ENCODE measurements at regions of chr21 and their contacts with region 1.

Region 1: DNA sequence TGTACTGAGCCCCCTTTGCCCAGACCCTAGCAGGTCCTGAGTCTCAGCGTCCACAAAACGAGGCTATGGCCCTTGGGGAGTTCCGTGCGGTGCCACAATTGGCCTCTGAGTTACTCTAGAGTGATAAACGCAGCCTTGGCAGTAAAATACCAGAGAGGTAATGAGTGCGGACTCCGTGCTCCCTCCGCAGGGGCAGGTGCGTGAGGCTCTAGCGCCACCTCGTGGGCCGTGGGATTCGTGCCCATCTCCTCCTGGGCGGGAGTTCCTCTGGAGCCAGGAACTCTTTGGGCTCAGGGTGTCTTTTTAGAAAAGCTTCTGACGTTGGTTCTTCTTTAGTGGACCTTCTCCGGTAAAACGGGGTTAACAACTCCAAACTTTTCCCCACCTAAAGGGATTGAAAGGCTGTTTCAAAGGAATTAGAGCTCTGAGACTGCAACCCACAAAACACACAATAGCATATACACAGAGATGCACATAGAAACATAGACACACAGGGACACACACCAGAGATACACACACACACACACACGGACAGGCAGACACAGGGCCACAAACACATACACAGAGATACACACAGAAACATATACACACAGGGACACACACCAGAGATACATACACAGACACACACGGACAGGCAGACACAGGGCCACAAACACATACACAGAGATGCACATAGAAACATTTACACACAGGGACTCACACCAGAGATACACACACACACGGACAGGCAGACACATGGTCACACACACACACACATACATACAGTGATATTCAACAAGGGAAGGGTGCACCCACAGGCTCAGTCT is 99.4 kb downstream of the KCNJ15 start:
- DNase-seq: no peak
- H3K4me3 ChIP-seq: no peak overlapping the region
- CTCF ChIP-seq: peak; percentile 98

Region 2: GRCh38 chr21:37700641-37701202 is 655.5 kb before region 1 on chr21:
- CTCF ChIA-PET with region 1: interaction called, 39 read pairs
- POLR2A ChIA-PET with region 1: no interaction called
- DNase-seq: peak; percentile 45
- H3K4me3 ChIP-seq: no peak overlapping the region
- CTCF ChIP-seq: peak; percentile 72

Region 3: GRCh38 chr21:38126669-38127303 is 229.4 kb before region 1 on chr21:
- CTCF ChIA-PET with region 1: interaction called, 30 read pairs
- POLR2A ChIA-PET with region 1: no interaction called
- DNase-seq: no peak
- H3K4me3 ChIP-seq: no peak overlapping the region
- CTCF ChIP-seq: peak; percentile 84

Region 4: DNA sequence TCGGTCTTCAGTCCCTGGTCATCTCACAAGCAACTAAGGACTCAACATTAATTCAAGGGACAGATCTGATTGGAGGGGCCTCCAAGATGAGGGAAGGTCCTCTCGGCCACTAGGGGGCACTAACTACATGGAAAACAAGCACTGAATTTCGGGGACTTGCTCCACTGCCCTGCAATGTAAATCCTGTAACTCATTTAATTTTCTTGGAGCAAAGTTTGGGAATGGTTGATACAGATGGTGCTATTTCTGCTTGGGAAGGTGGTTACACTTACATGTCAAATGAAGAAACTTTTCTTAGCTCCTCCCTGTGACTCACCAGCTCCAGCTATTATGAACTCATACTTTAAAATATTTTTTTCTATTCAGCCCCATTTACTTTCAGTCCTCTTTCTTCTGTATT is 196.8 kb before region 1 on chr21:
- CTCF ChIA-PET with region 1: interaction called, 459 read pairs
- POLR2A ChIA-PET with region 1: no interaction called
- DNase-seq: peak; percentile 49
- H3K4me3 ChIP-seq: no peak overlapping the region
- CTCF ChIP-seq: peak; percentile 82

Region 5: DNA sequence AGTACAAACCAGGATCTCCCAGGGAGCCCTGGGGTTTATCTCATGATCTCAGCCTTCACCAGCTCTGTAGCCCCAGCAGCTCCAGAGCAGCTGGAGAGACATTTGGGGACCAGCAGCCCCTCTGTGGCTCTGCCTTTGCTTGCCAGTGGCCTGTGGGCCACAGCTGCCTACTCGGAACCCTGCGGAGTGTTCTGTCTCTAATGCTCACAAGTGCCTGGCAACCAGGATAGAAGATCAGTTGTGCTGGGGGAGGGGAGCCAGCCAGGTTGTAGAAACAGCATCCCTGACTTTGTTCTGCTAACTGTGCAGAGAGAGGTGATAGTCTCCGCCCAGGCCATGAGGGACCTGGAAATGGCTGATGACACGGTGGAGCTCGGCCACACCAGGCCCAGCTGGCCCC is 150.3 kb before region 1 on chr21:
- CTCF ChIA-PET with region 1: interaction called, 10 read pairs
- POLR2A ChIA-PET with region 1: no interaction called
- DNase-seq: no peak
- H3K4me3 ChIP-seq: no peak overlapping the region
- CTCF ChIP-seq: no peak

Region 6: GRCh38 chr21:38244885-38245545 is 111.2 kb before region 1 on chr21:
- CTCF ChIA-PET with region 1: interaction called, 14 read pairs
- POLR2A ChIA-PET with region 1: interaction called, 4 read pairs
- DNase-seq: peak; percentile 86
- H3K4me3 ChIP-seq: no peak overlapping the region
- CTCF ChIP-seq: no peak

Region 7: DNA sequence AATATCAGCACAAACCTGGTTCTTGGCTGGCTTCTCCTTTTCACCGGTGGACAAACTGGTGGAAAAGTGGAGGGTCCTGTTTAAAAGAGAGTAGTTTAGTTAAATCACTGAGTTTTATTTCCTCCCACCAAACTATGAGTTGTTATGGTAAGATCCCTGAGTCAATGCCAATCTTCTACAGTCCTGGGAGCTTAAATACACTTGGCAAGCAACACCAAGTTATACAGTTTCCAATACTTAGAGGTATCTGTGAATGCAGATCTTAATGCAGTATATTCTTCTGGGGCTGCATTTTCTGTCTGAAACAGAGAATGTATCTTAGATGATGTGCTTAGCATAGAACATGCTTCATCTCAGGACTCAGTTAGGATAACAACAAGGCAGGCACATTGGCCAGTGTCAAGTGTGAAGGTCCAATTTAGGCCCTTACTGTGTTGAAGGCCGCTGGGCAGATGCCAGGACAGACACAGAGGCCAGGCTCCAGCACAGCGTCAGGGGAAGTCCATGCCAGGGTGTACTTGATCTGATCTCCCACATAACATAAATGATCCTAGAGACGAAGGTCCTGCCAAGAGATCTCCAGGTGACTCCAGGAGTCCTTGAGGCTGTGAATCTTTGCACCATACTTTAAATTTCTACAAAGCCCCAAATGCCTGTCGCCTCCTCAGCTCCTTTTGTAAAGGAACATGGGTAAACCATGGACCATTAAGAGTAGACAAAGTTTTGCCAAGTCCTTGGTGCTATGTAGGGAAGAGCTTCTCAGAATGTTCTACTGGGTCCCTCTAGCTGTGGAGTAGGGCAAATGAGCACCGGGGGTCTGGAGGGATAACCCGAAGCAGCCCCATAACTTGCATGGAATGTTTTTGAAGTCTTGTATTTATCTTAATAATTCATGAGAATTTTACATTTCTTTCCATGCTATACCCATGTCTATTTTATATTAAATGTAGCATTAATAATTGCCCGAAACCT is 22.6 kb before region 1 on chr21:
- CTCF ChIA-PET with region 1: interaction called, 10 read pairs
- POLR2A ChIA-PET with region 1: no interaction called
- DNase-seq: no peak
- H3K4me3 ChIP-seq: no peak overlapping the region
- CTCF ChIP-seq: peak; percentile 22